Sciatic nerve (tissue), 2 donors: ENCODE measurements at regions of chr2 and their contacts with region 1.

Region 1: GRCh38 chr2:46062637-46063412 is 234.4 kb upstream of the EPAS1 start:
- DNase-seq: peak; percentile 93
- ATAC-seq: peak; percentile 94

Region 2: GRCh38 chr2:46200220-46200621 is 137.4 kb after region 1 on chr2:
- intact Hi-C with region 1: no loop called
- DNase-seq: peak; percentile 31
- ATAC-seq: no peak

Region 3: DNA sequence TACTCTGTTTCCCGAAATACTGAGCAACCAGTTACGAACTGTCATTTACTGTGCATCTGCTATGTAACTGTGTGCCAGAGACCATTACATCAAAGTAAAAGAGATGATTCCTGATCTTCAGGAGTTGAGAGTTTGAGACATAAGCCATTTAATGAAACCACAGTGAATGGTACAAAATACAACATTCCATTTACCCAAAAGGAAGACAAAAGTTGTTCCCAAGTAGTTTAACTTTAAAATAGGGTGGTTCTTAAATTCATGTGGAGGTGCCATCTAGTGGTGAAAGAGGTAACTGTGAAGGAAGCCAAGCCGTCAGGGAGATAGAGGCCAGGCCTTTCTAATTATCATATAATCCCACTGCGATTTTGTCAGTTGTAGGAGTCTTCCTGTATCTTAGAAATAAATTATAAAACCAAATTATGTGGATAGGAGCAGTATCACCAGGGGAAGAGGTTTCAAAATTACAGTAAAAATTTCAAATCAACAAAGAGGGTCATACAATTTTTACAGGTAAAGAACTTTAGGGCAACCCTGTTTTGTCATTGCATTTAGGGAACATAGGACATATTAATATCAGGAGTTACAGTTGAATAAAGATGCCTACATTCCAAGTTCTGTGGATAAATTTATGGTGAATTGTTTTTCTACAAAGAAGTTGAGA is 302.1 kb after region 1 on chr2:
- intact Hi-C with region 1: loop called (anchors 10 kb)
- DNase-seq: no peak
- ATAC-seq: peak; percentile 68